Heart left ventricle (tissue), 16 donors: ENCODE measurements at regions of chr3 and their contacts with region 1.

Region 1: DNA sequence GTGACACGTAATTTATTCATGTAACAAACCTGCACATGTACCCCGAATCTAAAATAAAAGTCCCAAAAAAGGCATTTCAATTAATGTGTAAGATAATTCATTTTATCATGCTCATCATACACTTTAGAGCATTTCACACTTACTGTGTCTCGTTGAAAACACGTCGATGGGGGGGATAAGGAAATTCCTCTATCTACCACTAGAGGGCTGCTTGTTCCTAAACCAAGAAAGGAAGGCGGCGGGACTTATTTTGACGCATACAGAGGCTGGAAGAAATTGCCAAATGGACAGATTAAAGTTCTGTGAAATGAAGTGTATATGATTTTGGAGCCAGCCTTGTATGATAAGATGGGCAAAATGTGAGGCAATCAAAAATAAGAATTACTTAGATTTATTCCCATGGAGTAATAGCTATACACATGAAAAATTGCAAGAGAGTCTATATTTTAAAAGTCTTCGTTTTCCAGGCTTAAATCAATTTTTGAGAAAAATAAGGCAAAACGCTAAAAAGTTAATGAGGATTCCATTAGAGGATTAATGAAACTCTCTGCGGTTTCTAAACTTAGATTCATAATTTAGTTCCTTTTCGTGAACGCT is 346.8 kb downstream of the CNTN3 start:
- DNase-seq: peak in 1 of 5 donors; percentile 20
- ATAC-seq: peak in 1 of 4 donors; percentile 51
- H3K4me3 ChIP-seq: no peak overlapping the region
- H3K27ac ChIP-seq: no peak overlapping the region
- H3K4me1 ChIP-seq: no peaks in the 10 kb centered on the region
- H3K27me3 ChIP-seq: peaks cover 0 to 6% (median 0%) of the 10 kb centered on the region in 9 donors
- CTCF ChIP-seq: peak; percentile 55 to 78 (median 72)
- POLR2A ChIP-seq: no peak

Region 2: DNA sequence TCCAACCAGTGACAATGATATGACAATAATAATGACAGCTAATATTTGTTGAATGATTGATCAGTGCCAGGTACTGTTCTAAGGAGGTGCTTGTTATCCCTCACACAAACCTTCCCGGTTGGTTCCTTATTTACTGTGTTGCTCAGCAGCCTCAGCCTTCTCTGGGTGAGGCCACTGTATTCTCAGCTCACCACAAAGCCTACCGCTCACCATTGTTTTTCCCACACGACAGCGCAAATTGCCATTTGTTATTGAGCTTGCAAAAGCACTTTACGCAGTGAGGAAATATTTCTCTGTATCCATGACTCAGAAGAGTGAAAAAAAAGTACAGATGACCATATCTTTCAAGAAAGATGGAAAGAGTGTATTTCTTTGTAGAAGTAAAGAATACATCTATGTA is 593.4 kb before region 1 on chr3:
- intact Hi-C with region 1: no loop called
- DNase-seq: no peak
- ATAC-seq: no peak
- H3K4me3 ChIP-seq: no peak overlapping the region
- H3K27ac ChIP-seq: no peak overlapping the region
- H3K4me1 ChIP-seq: peaks cover 0 to under 1% (median 0%) of the 10 kb centered on the region in 12 donors
- H3K27me3 ChIP-seq: no peaks in the 10 kb centered on the region
- CTCF ChIP-seq: no peak
- POLR2A ChIP-seq: no peak

Region 3: GRCh38 chr3:73901686-73902085 is 366.0 kb before region 1 on chr3:
- intact Hi-C with region 1: no loop called
- DNase-seq: no peak
- ATAC-seq: no peak
- H3K4me3 ChIP-seq: no peak overlapping the region
- H3K27ac ChIP-seq: no peak overlapping the region
- H3K4me1 ChIP-seq: no peaks in the 10 kb centered on the region
- H3K27me3 ChIP-seq: peaks cover 0 to 3% (median 0%) of the 10 kb centered on the region in 9 donors
- CTCF ChIP-seq: no peak
- POLR2A ChIP-seq: no peak

Region 4: DNA sequence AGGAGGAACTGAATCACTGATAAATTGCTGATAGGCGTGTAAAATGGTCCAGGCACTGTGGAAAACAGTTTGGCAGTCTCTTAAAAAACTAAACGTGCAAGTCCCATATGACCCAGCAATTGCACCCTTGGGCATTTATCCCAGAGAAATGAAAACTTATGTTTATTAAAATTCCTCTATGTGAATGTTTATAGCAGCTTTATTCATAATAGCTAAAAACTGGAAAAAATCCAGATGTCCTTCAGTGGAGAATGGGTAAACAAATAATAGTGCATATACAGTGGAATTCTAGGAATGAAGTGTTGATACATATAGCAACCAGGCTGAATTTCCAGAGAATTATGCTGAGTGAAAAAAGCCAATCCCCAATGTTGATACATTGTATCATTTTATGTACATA is 160.8 kb before region 1 on chr3:
- intact Hi-C with region 1: no loop called
- DNase-seq: no peak
- ATAC-seq: no peak
- H3K4me3 ChIP-seq: no peak overlapping the region
- H3K27ac ChIP-seq: no peak overlapping the region
- H3K4me1 ChIP-seq: no peaks in the 10 kb centered on the region
- H3K27me3 ChIP-seq: no peaks in the 10 kb centered on the region
- CTCF ChIP-seq: no peak
- POLR2A ChIP-seq: no peak

Region 5: GRCh38 chr3:74624301-74624700 is 356.6 kb after region 1 on chr3:
- intact Hi-C with region 1: loop called in 1 of 10 experiments (anchors 10 kb)
- DNase-seq: no peak
- ATAC-seq: no peak
- H3K4me3 ChIP-seq: no peak overlapping the region
- H3K27ac ChIP-seq: no peak overlapping the region
- H3K4me1 ChIP-seq: no peaks in the 10 kb centered on the region
- H3K27me3 ChIP-seq: no peaks in the 10 kb centered on the region
- CTCF ChIP-seq: no peak
- POLR2A ChIP-seq: no peak

Region 6: GRCh38 chr3:74992898-74993297 is 725.2 kb after region 1 on chr3:
- intact Hi-C with region 1: loop called in 1 of 10 experiments (anchors 10 kb)
- DNase-seq: no peak
- ATAC-seq: no peak
- H3K4me3 ChIP-seq: no peak overlapping the region
- H3K27ac ChIP-seq: no peak overlapping the region
- H3K4me1 ChIP-seq: no peaks in the 10 kb centered on the region
- H3K27me3 ChIP-seq: peaks cover 0 to 3% (median 0%) of the 10 kb centered on the region in 9 donors
- CTCF ChIP-seq: no peak
- POLR2A ChIP-seq: no peak

Region 7: DNA sequence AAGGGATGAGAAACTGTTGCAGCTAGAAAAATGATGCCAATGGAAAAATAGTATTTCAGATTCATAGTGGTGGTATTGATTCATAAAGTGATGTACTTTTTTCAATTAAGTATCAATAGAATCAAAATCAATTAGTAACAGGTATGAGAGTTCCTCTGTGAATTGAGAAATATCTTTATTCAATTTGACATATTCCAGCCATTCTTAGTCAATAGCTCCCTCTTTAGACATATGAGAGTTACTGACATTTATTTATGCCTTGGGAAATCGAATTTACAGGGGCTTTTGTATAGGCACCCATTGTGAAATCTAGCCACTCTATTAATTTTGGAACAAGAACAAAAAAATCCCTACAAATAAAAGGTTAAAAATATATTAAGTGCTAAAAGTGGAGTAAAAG is 733.6 kb after region 1 on chr3:
- intact Hi-C with region 1: loop called in 8 of 10 experiments (anchors 5 to 10 kb)
- DNase-seq: no peak
- ATAC-seq: no peak
- H3K4me3 ChIP-seq: no peak overlapping the region
- H3K27ac ChIP-seq: no peak overlapping the region
- H3K4me1 ChIP-seq: no peaks in the 10 kb centered on the region
- H3K27me3 ChIP-seq: peaks cover 0 to 3% (median 0%) of the 10 kb centered on the region in 9 donors
- CTCF ChIP-seq: peak in 11 of 12 donors; percentile 15 to 55 (median 36)
- POLR2A ChIP-seq: no peak

Region 8: GRCh38 chr3:75171630-75172230 is 904.0 kb after region 1 on chr3:
- intact Hi-C with region 1: loop called in 1 of 10 experiments (anchors 10 kb)
- DNase-seq: no peak
- ATAC-seq: no peak
- H3K4me3 ChIP-seq: no peak overlapping the region
- H3K27ac ChIP-seq: no peak overlapping the region
- H3K4me1 ChIP-seq: no peaks in the 10 kb centered on the region
- H3K27me3 ChIP-seq: peaks cover 0 to 13% (median 0%) of the 10 kb centered on the region in 9 donors
- CTCF ChIP-seq: peak in 8 of 12 donors; percentile 7 to 47 (median 33)
- POLR2A ChIP-seq: no peak